Panc1 (cell line): ENCODE measurements at regions of chr10 and their contacts with region 1.

Region 1: GRCh38 chr10:128859738-128860386 is 607.2 kb upstream of the MGMT start:
- DNase-seq: peak; percentile 20
- ATAC-seq: peak; percentile 75
- H3K4me3 ChIP-seq: no peak overlapping the region
- H3K27ac ChIP-seq: no peak overlapping the region
- H3K4me1 ChIP-seq: no peaks in the 10 kb centered on the region
- H3K27me3 ChIP-seq: no peaks in the 10 kb centered on the region
- CTCF ChIP-seq: peak; percentile 81

Region 2: GRCh38 chr10:128268015-128268722 is 591.7 kb before region 1 on chr10:
- CTCF ChIA-PET with region 1: no interaction called
- POLR2A ChIA-PET with region 1: no interaction called
- in situ Hi-C with region 1: no loop called
- intact Hi-C with region 1: loop called (anchors 5 kb)
- DNase-seq: no peak
- ATAC-seq: peak; percentile 84
- H3K4me3 ChIP-seq: no peak overlapping the region
- H3K27ac ChIP-seq: no peak overlapping the region
- H3K4me1 ChIP-seq: no peaks in the 10 kb centered on the region
- H3K27me3 ChIP-seq: peaks cover 15% of the 10 kb centered on the region
- CTCF ChIP-seq: peak; percentile 86

Region 3: GRCh38 chr10:128660726-128661125 is 199.1 kb before region 1 on chr10:
- CTCF ChIA-PET with region 1: interaction called, 10 read pairs
- POLR2A ChIA-PET with region 1: no interaction called
- in situ Hi-C with region 1: no loop called
- intact Hi-C with region 1: no loop called
- DNase-seq: no peak
- ATAC-seq: no peak
- H3K4me3 ChIP-seq: no peak overlapping the region
- H3K27ac ChIP-seq: no peak overlapping the region
- H3K4me1 ChIP-seq: no peaks in the 10 kb centered on the region
- H3K27me3 ChIP-seq: no peaks in the 10 kb centered on the region
- CTCF ChIP-seq: peak; percentile 23

Region 4: GRCh38 chr10:128896116-128896795 is 36.4 kb after region 1 on chr10:
- CTCF ChIA-PET with region 1: no interaction called
- POLR2A ChIA-PET with region 1: no interaction called
- in situ Hi-C with region 1: no loop called
- intact Hi-C with region 1: no loop called
- DNase-seq: no peak
- ATAC-seq: no peak
- H3K4me3 ChIP-seq: no peak overlapping the region
- H3K27ac ChIP-seq: no peak overlapping the region
- H3K4me1 ChIP-seq: no peaks in the 10 kb centered on the region
- H3K27me3 ChIP-seq: peaks cover 6% of the 10 kb centered on the region; the same call in 1 of the 2 replicates
- CTCF ChIP-seq: no peak